Dorsolateral prefrontal cortex (tissue), 120 donors: ENCODE measurements at regions of chr12 and their contacts with region 1.

Region 1: GRCh38 chr12:98644711-98645402 is at the starts of genes APAF1 and IKBIP:
- DNase-seq: peak; percentile 93 to 97 (median 96)
- H3K4me3 ChIP-seq: peak within 1 kb of the TSS; percentile 63 to 100 (median 95)
- H3K27ac ChIP-seq: peak within 1 kb of the TSS in 58 of 59 donors; percentile 33 to 92 (median 78)
- H3K27me3 ChIP-seq: no peaks in the 10 kb centered on the region
- CTCF ChIP-seq: peak in 20 of 56 donors; percentile 3 to 62 (median 26)
- total RNA-seq, gene APAF1: 9.1 to 25.1 (median 14.5) TPM
- total RNA-seq, gene IKBIP: 1.4 to 7.5 (median 3.1) TPM

Region 2: DNA sequence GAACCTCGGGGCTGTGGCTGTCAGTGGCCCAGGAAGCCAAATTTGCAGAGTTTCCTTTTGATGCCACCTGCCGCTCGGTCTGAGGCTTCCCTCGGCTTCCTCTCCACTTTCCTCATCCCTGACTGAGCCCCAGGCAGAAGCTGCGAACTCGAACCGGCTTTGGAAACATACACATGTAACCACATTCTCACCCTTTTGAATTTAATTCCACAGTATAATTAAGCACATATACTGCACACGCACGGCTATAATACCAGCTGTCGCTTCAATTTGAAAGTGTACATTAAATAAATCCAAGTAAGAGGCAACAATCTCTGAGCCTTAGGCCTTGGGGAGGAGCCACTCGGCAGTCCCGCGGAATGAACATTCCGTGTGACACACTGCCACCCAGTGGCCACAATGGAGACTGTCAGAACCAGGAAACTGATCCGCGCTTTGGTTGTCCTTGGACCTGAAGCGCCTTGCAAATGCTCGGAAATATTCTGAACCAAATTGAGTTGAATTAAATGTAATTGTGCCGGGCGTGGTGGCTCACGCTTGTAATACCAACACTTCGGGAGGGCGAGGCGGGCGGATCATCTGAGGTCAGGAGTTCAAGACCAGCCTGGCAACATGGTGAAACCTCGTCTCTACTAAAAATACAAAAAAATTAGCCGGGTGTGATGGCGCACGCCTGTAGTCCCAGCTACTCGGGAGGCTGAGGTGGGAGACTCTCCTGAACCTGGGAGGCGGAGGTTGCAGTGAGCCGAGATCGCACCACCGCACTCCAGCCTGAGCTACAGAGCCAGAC is 247.3 kb before region 1 on chr12:
- intact Hi-C with region 1: no loop called
- DNase-seq: peak; percentile 71 to 89 (median 82)
- H3K4me3 ChIP-seq: peak overlapping the region in 58 of 59 donors; percentile 7 to 69 (median 54)
- H3K27ac ChIP-seq: peak overlapping the region in 13 of 59 donors; percentile 12 to 76 (median 39)
- H3K27me3 ChIP-seq: no peaks in the 10 kb centered on the region
- CTCF ChIP-seq: peak; percentile 87 to 98 (median 95)

Region 3: DNA sequence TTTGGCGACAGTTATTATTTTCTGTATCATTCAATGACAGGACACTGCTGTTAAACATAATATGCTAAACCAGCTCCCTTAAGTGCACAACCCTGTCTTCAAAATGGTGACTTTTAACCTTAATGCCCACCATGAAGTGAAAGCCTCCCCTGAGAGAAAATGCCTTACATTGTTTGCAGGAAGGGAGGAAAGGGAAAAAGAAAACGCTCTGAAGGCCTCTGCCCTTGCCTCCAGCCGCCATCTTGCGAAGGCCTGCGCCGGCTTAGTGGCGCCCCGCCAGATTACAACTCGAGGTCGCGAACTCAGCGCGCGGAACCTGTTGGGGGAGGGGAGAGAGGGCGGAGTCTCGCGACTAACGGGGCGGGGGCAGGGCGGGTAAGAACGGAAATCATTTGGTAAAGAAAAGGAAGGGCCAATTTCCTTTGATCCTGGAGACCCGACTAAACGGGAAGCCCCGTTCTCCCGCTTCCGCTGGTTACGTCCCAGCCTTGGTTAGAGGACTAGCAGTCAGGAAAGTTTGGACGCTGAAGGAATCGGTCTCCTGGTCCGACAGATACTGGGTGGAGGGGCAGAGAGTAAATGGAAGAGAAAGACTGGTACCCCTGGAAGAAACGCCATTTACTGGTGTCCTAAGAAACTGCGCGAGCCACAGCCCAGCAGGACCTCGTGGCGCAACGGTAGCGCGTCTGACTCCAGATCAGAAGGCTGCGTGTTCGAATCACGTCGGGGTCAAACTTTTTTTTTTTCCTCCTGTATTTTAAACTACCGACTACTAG is 141.1 kb before region 1 on chr12:
- intact Hi-C with region 1: loop called in 1 of 2 experiments (anchors 5 kb)
- DNase-seq: peak; percentile 77 to 93 (median 88)
- H3K4me3 ChIP-seq: peak overlapping the region; percentile 48 to 93 (median 80)
- H3K27ac ChIP-seq: peak overlapping the region; percentile 94 to 100 (median 99)
- H3K27me3 ChIP-seq: no peaks in the 10 kb centered on the region
- CTCF ChIP-seq: peak in 15 of 56 donors; percentile 1 to 48 (median 13)

Region 4: DNA sequence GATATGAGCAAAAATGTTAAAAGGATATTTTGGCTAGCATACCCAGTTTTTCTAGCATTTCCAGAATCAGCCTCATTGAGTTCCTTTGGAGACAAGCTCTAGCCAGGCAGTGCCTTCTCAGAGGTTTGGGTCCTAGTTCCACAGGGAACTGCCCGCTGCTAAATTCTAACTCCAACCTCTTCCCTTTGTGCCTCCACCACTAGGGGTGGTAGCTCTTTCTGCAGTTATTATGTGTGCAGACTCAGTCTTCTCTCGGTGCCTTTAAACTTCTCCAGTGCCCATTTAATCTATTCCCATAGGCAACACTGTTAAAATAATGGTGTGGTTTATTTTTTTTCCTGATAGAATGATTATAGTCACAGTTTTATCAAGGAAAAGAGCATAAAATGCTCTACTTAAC is 72.8 kb before region 1 on chr12:
- intact Hi-C with region 1: loop called (anchors 2 to 5 kb)
- DNase-seq: no peak
- H3K4me3 ChIP-seq: no peak overlapping the region
- H3K27ac ChIP-seq: no peak overlapping the region
- H3K27me3 ChIP-seq: no peaks in the 10 kb centered on the region
- CTCF ChIP-seq: peak in 8 of 56 donors; percentile 6 to 21 (median 10)

Region 5: GRCh38 chr12:98593351-98594049 is 51.4 kb before region 1 on chr12 and contains the start of gene SLC25A3:
- intact Hi-C with region 1: loop called (anchors 2 kb)
- DNase-seq: peak; percentile 92 to 99 (median 97)
- H3K4me3 ChIP-seq: peak within 1 kb of the TSS; percentile 69 to 100 (median 97)
- H3K27ac ChIP-seq: peak within 1 kb of the TSS; percentile 71 to 100 (median 97)
- H3K27me3 ChIP-seq: no peaks in the 10 kb centered on the region
- CTCF ChIP-seq: peak in 18 of 56 donors; percentile 1 to 32 (median 17)
- total RNA-seq, gene SLC25A3: 217 to 466 (median 347) TPM